ENCODE measurements at regions of chr5 and their contacts with region 1.

Region 1: GRCh38 chr5:42889311-42889933 is 77.7 kb upstream of the SELENOP start:
- DNase-seq: peak in 9 of 10 donors; percentile 48 to 95 (median 82)

Region 2: GRCh38 chr5:41856644-41857491 is 1032.6 kb before region 1 on chr5:
- intact Hi-C with region 1: loop called (anchors 5 kb)
- DNase-seq: peak in 5 of 10 donors; percentile 32 to 79 (median 42)

Region 3: GRCh38 chr5:42423285-42424165 is 465.9 kb before region 1 on chr5 and contains the start of gene GHR:
- intact Hi-C with region 1: loop called (anchors 10 kb)
- DNase-seq: peak; percentile 65 to 96 (median 76)

Region 4: GRCh38 chr5:42745426-42745825 is 144.0 kb before region 1 on chr5:
- intact Hi-C with region 1: loop called (anchors 5 kb)
- DNase-seq: peak in 1 of 10 donors; percentile 38

Region 5: DNA sequence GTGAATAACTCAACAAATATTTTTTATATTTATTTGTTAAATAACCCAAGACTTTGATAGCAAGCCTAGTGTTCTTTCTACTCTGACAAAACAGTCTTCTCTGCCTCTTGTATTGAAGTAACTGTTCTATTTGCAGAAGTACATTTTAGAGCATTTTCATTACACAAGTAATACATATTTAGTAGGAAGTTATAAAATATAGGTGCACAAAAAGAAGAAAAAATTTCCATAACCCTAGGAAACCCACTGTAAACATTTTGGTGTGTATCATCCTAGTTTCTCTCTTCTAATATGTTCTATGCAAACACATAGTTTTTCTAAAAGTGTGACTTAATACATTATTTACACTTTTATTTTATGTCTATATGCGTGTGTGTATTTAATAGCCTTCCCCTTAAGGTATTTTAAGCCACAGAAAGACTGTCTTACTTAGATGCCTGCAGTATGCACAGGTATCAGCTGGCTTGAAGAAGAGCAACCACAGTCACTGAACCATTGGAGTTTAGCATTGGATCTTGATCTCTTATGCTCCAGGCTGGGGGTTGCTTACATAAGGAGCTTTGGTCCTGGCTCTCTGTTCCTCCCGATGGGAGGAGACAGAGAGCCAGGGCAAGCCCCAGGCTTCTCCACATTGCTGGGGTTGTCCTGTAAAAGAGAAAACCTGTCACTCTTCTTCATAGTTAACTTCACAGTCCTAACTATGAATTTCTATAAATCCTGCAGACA is 81.5 kb before region 1 on chr5:
- intact Hi-C with region 1: loop called (anchors 2 kb)
- DNase-seq: peak in 2 of 10 donors; percentile 36 to 78

Region 6: DNA sequence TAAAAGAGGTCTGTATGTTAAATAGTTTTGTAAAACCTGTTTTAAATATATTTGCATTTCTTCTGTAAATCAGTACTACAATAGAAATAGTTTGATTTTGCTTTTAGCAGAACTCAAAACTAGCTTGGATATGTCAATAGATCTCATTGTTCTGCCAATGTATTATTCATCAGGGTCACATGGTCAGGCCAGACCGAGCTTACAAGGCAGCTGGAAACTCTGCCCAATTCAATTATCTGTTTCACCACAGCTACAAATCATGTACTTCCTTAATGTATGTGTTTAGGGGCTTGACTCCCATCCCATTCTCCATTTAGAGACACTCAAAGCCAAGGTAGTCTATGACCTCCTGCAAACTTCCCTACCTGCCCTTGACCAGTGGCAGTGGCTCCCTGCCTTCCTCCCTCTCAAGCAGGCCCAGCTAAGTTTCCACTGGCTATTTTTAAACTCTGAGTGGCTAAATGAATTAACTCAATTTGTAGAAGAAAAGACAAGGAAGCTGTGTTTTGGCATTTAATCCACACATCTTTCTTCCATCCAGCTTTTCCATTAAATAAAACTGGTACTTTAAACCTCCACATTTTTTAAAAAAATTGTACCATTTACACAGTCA is 31.3 kb before region 1 on chr5:
- intact Hi-C with region 1: loop called (anchors 2 kb)
- DNase-seq: peak in 2 of 10 donors; percentile 58 to 81

Measured in posterior cingulate gyrus (tissue), 11 donors.